PC-3 (cell line): ENCODE measurements at regions of chr2 and their contacts with region 1.

Region 1: DNA sequence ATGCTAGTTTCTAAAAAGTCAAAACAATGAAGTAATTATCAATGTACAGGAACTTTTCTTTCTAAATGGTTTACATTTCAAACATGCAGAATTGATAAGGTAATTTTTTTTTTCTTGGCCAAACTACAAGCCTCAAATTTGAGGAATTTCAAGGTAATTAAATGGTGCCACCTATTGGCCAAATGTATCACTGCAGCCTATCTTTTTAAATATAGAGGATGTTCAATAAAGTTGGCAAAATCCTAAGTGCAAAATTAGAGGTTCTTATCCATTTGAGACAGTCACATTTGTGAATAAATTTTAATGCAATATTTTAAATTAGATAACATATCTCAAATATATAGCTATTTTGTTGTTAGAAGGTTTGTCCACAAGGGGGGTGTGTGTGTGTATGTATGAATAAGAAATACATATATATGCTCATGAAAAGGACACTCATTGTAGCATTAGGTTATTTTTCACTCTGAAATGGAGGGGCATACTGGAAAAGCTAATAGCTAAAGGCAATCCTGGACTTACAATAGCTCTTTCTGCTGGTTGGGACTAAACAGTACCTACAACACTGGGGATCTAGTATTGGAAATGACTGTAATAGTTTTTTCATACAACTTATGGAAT is 26.2 kb downstream of the MMADHC start:
- DNase-seq: peak; percentile 77
- ATAC-seq: no peak
- H3K4me3 ChIP-seq: no peak overlapping the region
- H3K27ac ChIP-seq: no peak overlapping the region
- H3K4me1 ChIP-seq: peaks cover 19% of the 10 kb centered on the region
- H3K27me3 ChIP-seq: no peaks in the 10 kb centered on the region
- CTCF ChIP-seq: peak; percentile 92

Region 2: GRCh38 chr2:149017116-149017985 is 544.1 kb before region 1 on chr2:
- CTCF ChIA-PET with region 1: interaction called, 3 read pairs
- POLR2A ChIA-PET with region 1: no interaction called
- intact Hi-C with region 1: loop called (anchors 1 kb)
- DNase-seq: peak; percentile 86
- ATAC-seq: peak; percentile 78
- H3K4me3 ChIP-seq: no peak overlapping the region
- H3K27ac ChIP-seq: no peak overlapping the region
- H3K4me1 ChIP-seq: no peaks in the 10 kb centered on the region
- H3K27me3 ChIP-seq: no peaks in the 10 kb centered on the region
- CTCF ChIP-seq: peak; percentile 89

Region 3: DNA sequence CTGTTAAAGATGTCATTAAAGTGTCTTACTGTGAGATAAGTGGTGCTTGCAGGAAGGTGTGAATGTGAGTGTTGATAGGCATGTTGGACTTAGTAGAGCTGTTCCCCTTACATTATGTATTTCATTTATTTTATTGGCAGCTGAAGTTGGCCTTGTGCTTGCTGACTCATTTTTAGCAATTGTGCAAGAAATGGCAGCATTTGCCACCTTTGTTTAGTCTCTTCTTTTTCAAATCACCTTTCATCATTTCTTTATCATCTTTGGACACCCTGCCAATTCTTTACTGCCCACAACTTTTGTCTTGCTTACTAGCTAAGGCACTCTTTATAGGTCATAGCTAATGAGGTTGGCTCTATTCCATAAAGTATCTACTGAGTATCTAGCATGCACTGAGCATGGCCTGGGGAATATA is 361.3 kb before region 1 on chr2:
- CTCF ChIA-PET with region 1: no interaction called
- POLR2A ChIA-PET with region 1: no interaction called
- intact Hi-C with region 1: no loop called
- DNase-seq: peak; percentile 43
- ATAC-seq: no peak
- H3K4me3 ChIP-seq: no peak overlapping the region
- H3K27ac ChIP-seq: no peak overlapping the region
- H3K4me1 ChIP-seq: no peaks in the 10 kb centered on the region
- H3K27me3 ChIP-seq: peaks cover 48% of the 10 kb centered on the region
- CTCF ChIP-seq: no peak

Region 4: GRCh38 chr2:149330126-149331022 is 231.0 kb before region 1 on chr2 and contains the start of gene LYPD6:
- CTCF ChIA-PET with region 1: no interaction called
- POLR2A ChIA-PET with region 1: no interaction called
- intact Hi-C with region 1: loop called (anchors 1 kb)
- DNase-seq: peak; percentile 87
- ATAC-seq: peak; percentile 88
- H3K4me3 ChIP-seq: peak within 1 kb of the TSS; percentile 92
- H3K27ac ChIP-seq: no peak within 1 kb of the TSS
- H3K4me1 ChIP-seq: peaks cover 8% of the 10 kb centered on the region; the same call in 1 of the 2 replicates
- H3K27me3 ChIP-seq: no peaks in the 10 kb centered on the region
- CTCF ChIP-seq: no peak
- total RNA-seq, gene LYPD6: 1.9 and 2.4 TPM in 2 replicates

Region 5: GRCh38 chr2:149430743-149431737 is 130.4 kb before region 1 on chr2:
- CTCF ChIA-PET with region 1: interaction called, 4 read pairs
- POLR2A ChIA-PET with region 1: no interaction called
- intact Hi-C with region 1: loop called (anchors 10 kb)
- DNase-seq: peak; percentile 29
- ATAC-seq: peak; percentile 64
- H3K4me3 ChIP-seq: no peak overlapping the region
- H3K27ac ChIP-seq: no peak overlapping the region
- H3K4me1 ChIP-seq: no peaks in the 10 kb centered on the region; the same call in 1 of the 2 replicates
- H3K27me3 ChIP-seq: no peaks in the 10 kb centered on the region
- CTCF ChIP-seq: no peak

Region 6: DNA sequence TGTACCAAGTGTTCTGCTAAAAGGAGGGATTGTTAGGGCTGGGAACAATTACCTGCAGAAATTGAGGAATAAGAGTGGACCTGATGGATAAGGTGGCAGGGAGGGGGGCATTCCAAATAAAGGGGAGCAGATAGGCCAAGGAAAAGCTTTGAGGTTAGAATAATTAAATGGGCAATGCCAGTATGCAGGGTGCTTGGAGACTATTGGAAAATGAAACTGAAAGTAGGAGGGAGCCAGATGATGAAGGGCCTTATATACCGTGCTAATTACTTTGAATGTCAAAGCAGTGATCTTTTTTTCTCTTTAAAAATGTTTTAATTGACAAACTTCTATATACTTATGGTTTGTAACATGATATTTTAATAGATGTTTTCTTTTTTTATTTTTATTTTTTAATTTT is 16.7 kb before region 1 on chr2:
- CTCF ChIA-PET with region 1: no interaction called
- POLR2A ChIA-PET with region 1: no interaction called
- intact Hi-C with region 1: no loop called
- DNase-seq: no peak
- ATAC-seq: no peak
- H3K4me3 ChIP-seq: no peak overlapping the region
- H3K27ac ChIP-seq: no peak overlapping the region
- H3K4me1 ChIP-seq: peaks cover 4% of the 10 kb centered on the region; the same call in 1 of the 2 replicates
- H3K27me3 ChIP-seq: no peaks in the 10 kb centered on the region
- CTCF ChIP-seq: no peak